PC-9 (cell line): ENCODE measurements at regions of chr12 and their contacts with region 1.

Region 1: DNA sequence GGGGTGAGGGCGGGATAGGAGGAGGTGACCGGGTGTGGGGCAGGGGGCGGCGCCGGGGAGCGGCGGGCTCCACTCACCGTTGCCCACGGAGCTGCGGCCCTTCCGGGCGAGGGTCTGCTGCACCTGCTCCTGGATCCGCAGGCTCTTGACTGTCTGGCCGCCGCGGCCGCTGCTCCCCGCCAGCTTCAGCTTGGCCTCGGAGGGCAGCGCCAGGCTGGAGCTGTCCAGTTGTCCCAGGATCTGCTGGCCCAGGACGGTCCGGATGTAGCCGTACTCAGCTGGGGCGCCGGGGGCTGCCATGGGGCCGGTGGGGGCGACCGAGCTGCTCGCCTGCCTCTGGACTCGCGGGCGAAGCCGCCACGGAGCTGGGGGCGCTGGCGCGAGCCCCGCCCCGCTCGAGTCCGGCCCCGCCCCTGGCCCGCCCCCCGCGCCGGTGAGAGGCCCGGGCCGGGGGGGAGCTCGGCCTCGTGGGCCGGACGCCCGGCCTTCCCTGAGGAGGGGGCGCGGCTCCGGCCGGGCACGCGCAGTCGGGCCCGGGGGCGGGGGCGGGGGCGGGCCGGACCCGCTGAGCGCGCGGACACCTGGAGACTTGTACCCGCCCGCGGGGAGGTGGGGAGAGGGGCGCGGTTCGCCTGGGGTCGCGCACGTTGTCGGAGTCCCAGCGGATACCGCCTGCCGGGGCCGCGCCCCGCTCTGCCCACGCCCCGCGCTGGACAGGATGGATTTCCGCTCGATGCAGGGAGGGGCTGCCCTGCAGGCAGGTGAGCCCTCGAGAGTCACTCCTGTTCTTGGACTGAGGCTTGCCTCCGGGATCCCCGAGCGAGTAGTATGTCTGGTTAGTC is at the start of gene PKP2:
- DNase-seq: peak; percentile 98 to 100
- H3K4me3 ChIP-seq: peak within 1 kb of the TSS; percentile 93
- H3K27ac ChIP-seq: peak within 1 kb of the TSS; percentile 74
- H3K4me1 ChIP-seq: peaks cover 66% of the 10 kb centered on the region
- H3K27me3 ChIP-seq: no peaks in the 10 kb centered on the region
- CTCF ChIP-seq: no peak
- total RNA-seq, gene PKP2: 88.1 and 88.7 TPM in 2 replicates

Region 2: GRCh38 chr12:31491819-31492598 is 1404.6 kb before region 1 on chr12:
- CTCF ChIA-PET with region 1: no interaction called
- POLR2A ChIA-PET with region 1: interaction called, 11 read pairs
- intact Hi-C with region 1: no loop called
- DNase-seq: peak; percentile 68 to 90
- H3K4me3 ChIP-seq: no peak overlapping the region
- H3K27ac ChIP-seq: peak overlapping the region; percentile 60
- H3K4me1 ChIP-seq: peaks cover 33% of the 10 kb centered on the region
- H3K27me3 ChIP-seq: no peaks in the 10 kb centered on the region
- CTCF ChIP-seq: no peak

Region 3: DNA sequence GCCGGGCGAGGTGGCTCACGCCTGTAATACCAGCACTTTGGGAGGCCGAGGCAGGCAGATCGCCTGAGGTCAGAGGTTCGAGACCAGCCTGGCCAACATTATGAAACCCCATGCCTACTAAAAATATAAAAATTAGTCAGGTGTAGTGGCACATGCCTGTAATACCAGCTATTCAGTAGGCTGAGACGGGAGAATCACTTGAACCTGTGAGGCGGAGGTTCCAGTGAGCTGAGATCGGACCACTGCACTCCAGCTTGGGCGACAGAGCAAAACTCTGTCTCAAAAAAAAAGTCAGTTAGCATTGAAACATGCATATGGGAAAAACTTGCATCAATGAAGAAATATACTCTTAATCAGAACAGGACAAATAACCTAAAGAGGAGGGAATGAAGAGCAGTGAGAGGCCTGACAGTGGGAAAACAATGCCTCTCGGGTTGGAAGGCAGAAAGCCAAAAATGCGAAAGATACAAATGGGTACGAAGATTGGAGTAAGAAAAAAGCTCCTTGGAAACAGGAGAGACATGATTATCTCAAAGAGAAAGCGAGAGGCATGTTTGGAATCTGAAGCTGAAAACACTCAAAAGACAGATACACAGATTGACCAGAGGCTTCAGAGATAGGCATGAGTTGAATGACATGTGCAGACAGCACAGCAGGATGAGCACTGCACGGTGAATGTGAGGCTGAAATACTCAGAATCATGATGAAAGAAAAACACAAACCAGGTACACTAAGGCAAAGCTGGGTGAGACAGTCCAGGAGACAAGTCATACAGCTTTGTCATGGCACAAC is 906.9 kb before region 1 on chr12:
- CTCF ChIA-PET with region 1: no interaction called
- POLR2A ChIA-PET with region 1: interaction called, 18 read pairs
- intact Hi-C with region 1: no loop called
- DNase-seq: no peak
- H3K4me3 ChIP-seq: no peak overlapping the region
- H3K27ac ChIP-seq: no peak overlapping the region
- H3K4me1 ChIP-seq: no peaks in the 10 kb centered on the region
- H3K27me3 ChIP-seq: no peaks in the 10 kb centered on the region
- CTCF ChIP-seq: no peak

Region 4: DNA sequence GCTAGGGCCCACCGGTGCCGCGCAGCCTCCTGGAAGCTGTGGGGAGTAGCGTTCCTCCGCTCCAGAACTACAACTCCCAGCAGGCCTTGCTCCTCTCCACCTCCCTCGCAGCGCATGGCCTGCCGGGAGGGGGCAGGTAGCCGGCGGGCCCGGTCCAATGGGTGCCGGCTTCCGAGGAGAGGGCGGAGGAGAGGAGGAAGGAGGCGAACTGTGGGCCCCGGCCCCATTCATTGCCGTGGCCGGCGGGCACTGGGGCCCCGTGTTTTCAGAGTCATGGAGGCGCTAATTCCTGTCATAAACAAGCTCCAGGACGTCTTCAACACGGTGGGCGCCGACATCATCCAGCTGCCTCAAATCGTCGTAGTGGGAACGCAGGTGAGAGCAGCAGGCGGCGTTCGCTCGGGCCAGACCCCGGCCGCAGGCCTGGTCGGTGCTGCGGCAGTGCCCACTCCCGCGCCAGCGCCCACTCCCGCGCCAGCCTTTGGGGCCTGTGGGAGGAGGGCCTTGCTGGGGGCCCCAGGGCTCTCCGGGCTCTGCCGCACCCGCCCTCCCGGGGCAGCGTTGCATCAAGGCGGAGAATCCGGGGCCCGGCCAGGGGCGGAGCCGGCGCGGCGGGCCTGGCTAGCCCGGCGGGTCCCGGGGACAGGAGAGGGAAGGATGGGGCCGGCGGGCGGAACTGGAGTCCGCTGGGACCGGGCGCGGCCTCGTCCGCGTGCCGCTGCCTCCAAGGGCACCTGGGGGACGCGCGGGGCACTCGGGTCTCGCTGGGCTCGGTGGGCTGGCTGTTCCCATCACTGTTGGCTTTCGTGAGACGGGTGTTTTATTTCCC is 217.3 kb before region 1 on chr12 and contains the start of gene DNM1L:
- CTCF ChIA-PET with region 1: no interaction called
- POLR2A ChIA-PET with region 1: no interaction called
- intact Hi-C with region 1: loop called (anchors 1 kb)
- DNase-seq: peak; percentile 87 to 99
- H3K4me3 ChIP-seq: peak within 1 kb of the TSS; percentile 82
- H3K27ac ChIP-seq: peak within 1 kb of the TSS; percentile 71
- H3K4me1 ChIP-seq: peaks cover 26% of the 10 kb centered on the region
- H3K27me3 ChIP-seq: no peaks in the 10 kb centered on the region
- CTCF ChIP-seq: no peak
- total RNA-seq, gene DNM1L: 95.8 and 112 TPM in 2 replicates

Region 5: GRCh38 chr12:32918890-32919801 is 22.5 kb after region 1 on chr12:
- CTCF ChIA-PET with region 1: interaction called, 5 read pairs
- POLR2A ChIA-PET with region 1: interaction called, 39 read pairs
- intact Hi-C with region 1: loop called (anchors 1 kb)
- DNase-seq: peak in 1 of 2 experiments; percentile 63
- H3K4me3 ChIP-seq: no peak overlapping the region
- H3K27ac ChIP-seq: peak overlapping the region; percentile 45; the same call in 1 of the 2 replicates
- H3K4me1 ChIP-seq: peaks cover 45% of the 10 kb centered on the region
- H3K27me3 ChIP-seq: no peaks in the 10 kb centered on the region
- CTCF ChIP-seq: peak; percentile 60

Region 6: GRCh38 chr12:33012226-33012807 is 115.7 kb after region 1 on chr12:
- CTCF ChIA-PET with region 1: no interaction called
- POLR2A ChIA-PET with region 1: no interaction called
- intact Hi-C with region 1: loop called (anchors 5 kb)
- DNase-seq: peak; percentile 63 to 86
- H3K4me3 ChIP-seq: peak overlapping the region; percentile 30; the same call in 1 of the 2 replicates
- H3K27ac ChIP-seq: peak overlapping the region; percentile 37
- H3K4me1 ChIP-seq: peaks cover 17% of the 10 kb centered on the region
- H3K27me3 ChIP-seq: no peaks in the 10 kb centered on the region
- CTCF ChIP-seq: no peak

Region 7: GRCh38 chr12:33649992-33650391 is 753.3 kb after region 1 on chr12:
- CTCF ChIA-PET with region 1: no interaction called
- POLR2A ChIA-PET with region 1: no interaction called
- intact Hi-C with region 1: no loop called
- DNase-seq: no peak
- H3K4me3 ChIP-seq: no peak overlapping the region
- H3K27ac ChIP-seq: no peak overlapping the region
- H3K4me1 ChIP-seq: no peaks in the 10 kb centered on the region
- H3K27me3 ChIP-seq: no peaks in the 10 kb centered on the region
- CTCF ChIP-seq: no peak

Region 8: GRCh38 chr12:34022079-34022830 is 1125.6 kb after region 1 on chr12 and contains the start of gene ALG10:
- CTCF ChIA-PET with region 1: no interaction called
- POLR2A ChIA-PET with region 1: interaction called, 11 read pairs
- intact Hi-C with region 1: loop called (anchors 1 kb)
- DNase-seq: peak; percentile 93 to 99
- H3K4me3 ChIP-seq: peak within 1 kb of the TSS; percentile 76
- H3K27ac ChIP-seq: peak within 1 kb of the TSS; percentile 49
- H3K4me1 ChIP-seq: peaks cover 19% of the 10 kb centered on the region
- H3K27me3 ChIP-seq: no peaks in the 10 kb centered on the region
- CTCF ChIP-seq: peak; percentile 86
- total RNA-seq, gene ALG10: 21.5 and 23.3 TPM in 2 replicates